Activated T-helper 2 cell treated with anti-CD3 and anti-CD28 coated beads, Interferon-gamma antibody, Interleukin-2, Interleukin-4, amounts not matched to agents 10 μg/mL and 5 μg/mL and 100 μg/mL, durations not matched to agents 14 hours and 24 hours and 36 hours (primary cell): ENCODE measurements at regions of chr22 and their contacts with region 1.

Region 1: DNA sequence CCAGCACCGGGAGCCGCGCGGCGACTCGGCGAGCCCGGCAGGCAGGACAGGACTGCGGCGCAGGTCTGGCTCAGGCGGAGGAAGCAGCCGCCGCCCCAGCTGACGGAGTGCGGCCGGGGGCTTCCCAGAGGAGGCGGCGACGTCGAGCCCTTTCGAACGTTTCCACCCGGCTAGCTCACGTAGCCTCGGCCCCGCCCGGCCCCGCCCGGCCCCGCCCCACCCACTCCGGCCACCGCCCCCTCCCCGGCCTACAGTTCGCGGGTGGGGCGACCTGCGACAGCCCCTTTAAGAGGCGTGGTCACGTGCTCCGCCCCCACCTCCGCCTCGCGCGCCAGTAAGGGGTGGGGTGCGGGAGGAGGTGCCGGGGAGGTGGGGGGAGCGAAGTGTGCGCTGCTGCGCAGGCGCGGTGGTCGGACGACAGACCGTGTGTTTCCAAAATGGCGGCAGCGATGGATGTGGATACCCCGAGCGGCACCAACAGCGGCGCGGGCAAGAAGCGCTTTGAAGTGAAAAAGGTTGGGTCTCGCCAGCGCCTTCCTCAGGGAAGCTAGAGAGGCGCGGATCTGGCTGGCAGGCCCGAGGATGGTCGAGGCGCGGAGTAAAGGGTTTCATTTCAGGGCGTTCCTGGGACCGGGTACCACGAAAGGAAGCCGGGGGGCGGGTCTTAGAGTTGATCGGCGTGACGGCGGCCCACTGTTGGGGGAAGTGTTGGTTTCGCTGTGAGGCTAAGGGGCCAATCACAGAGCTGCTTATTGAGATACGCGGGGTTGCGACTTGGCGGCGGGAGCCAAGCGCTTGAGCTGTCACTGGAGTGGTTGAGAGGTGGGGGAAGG is at the start of gene RBX1:
- DNase-seq: peak; percentile 98
- H3K4me3 Mint-ChIP-seq: peak within 1 kb of the TSS; percentile 95
- H3K27ac Mint-ChIP-seq: peak within 1 kb of the TSS; percentile 98
- H3K4me1 Mint-ChIP-seq: peaks cover 28% of the 10 kb centered on the region
- H3K27me3 Mint-ChIP-seq: no peaks in the 10 kb centered on the region
- total RNA-seq, gene RBX1: 103 and 110 TPM in 2 replicates

Region 2: GRCh38 chr22:40856513-40857308 is 94.5 kb before region 1 on chr22 and contains the starts of genes ST13 and XPNPEP3:
- intact Hi-C with region 1: loop called (anchors 2 kb)
- DNase-seq: peak; percentile 96
- H3K4me3 Mint-ChIP-seq: peak within 1 kb of the TSS; percentile 96
- H3K27ac Mint-ChIP-seq: peak within 1 kb of the TSS; percentile 100
- H3K4me1 Mint-ChIP-seq: peaks cover 38% of the 10 kb centered on the region
- H3K27me3 Mint-ChIP-seq: no peaks in the 10 kb centered on the region
- total RNA-seq, gene ST13: 194 and 201 TPM in 2 replicates
- total RNA-seq, gene XPNPEP3: 17.5 and 17.9 TPM in 2 replicates

Region 3: GRCh38 chr22:40982482-40983385 is 31.6 kb after region 1 on chr22:
- intact Hi-C with region 1: no loop called
- DNase-seq: no peak
- H3K4me3 Mint-ChIP-seq: no peak overlapping the region
- H3K27ac Mint-ChIP-seq: no peak overlapping the region
- H3K4me1 Mint-ChIP-seq: no peaks in the 10 kb centered on the region
- H3K27me3 Mint-ChIP-seq: no peaks in the 10 kb centered on the region

Region 4: GRCh38 chr22:41022470-41023298 is 71.5 kb after region 1 on chr22:
- intact Hi-C with region 1: loop called (anchors 2 kb)
- DNase-seq: peak; percentile 73
- H3K4me3 Mint-ChIP-seq: peak overlapping the region; percentile 83
- H3K27ac Mint-ChIP-seq: peak overlapping the region; percentile 79
- H3K4me1 Mint-ChIP-seq: peaks cover 12% of the 10 kb centered on the region
- H3K27me3 Mint-ChIP-seq: peaks cover 15% of the 10 kb centered on the region

Region 5: DNA sequence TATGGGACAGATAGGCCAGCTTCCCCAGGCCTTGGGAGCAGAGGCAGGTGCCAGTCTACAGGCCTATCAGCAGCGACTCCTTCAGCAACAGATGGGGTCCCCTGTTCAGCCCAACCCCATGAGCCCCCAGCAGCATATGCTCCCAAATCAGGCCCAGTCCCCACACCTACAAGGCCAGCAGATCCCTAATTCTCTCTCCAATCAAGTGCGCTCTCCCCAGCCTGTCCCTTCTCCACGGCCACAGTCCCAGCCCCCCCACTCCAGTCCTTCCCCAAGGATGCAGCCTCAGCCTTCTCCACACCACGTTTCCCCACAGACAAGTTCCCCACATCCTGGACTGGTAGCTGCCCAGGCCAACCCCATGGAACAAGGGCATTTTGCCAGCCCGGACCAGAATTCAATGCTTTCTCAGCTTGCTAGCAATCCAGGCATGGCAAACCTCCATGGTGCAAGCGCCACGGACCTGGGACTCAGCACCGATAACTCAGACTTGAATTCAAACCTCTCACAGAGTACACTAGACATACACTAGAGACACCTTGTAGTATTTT is 227.3 kb after region 1 on chr22:
- intact Hi-C with region 1: no loop called
- DNase-seq: no peak
- H3K4me3 Mint-ChIP-seq: no peak overlapping the region
- H3K27ac Mint-ChIP-seq: no peak overlapping the region
- H3K4me1 Mint-ChIP-seq: peaks cover 2% of the 10 kb centered on the region
- H3K27me3 Mint-ChIP-seq: no peaks in the 10 kb centered on the region

Region 6: GRCh38 chr22:41204992-41205900 is 254.1 kb after region 1 on chr22 and contains the start of gene L3MBTL2:
- intact Hi-C with region 1: loop called (anchors 5 kb)
- DNase-seq: peak; percentile 98
- H3K4me3 Mint-ChIP-seq: peak within 1 kb of the TSS; percentile 85
- H3K27ac Mint-ChIP-seq: peak within 1 kb of the TSS; percentile 83
- H3K4me1 Mint-ChIP-seq: peaks cover 12% of the 10 kb centered on the region
- H3K27me3 Mint-ChIP-seq: peaks cover 15% of the 10 kb centered on the region
- total RNA-seq, gene L3MBTL2: 39.3 and 42.2 TPM in 2 replicates

Region 7: DNA sequence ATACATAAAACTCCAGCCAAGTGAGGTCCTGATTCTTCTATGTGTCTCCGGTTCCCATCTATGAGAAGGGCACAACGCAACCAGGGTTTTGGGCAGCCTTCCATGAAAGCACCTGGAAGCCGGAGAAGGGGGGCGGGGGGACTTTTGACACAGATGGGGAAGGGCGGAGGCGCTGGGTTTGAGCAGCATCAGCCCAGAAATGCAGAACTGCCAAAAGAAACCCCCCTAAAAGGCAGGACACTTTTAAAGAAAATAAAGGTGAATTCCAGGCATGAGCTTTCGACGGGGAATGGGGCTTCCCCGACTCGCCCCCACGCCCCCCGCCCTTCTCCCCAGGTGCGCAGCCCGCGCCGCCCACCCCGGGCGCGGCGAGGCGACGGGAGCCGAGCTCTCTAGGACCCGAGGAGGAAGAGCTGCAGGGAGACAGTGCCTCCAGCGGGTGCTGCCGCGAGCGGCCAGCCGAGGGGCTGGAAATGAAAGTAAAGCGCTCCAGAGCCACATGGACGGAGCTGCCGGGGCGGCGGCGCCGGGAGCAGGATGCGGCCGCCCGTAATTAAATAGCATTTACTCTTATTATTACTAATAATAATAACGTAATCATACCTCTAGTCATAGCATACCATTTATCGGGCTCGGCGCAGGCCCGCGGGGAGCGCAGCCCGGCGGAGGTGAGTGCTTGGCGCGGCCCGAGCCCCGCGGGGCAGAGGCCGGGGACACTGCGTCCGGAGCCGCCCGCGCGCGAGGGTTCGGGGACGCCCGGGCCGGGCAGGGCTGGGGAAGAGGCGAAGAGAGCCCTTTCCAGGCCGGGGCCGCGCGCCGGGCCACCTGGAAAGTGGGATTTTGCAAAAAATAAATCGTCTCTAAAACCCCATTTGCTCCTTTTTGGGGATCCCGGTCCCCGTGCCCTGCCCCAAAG is 350.2 kb after region 1 on chr22 and contains the start of gene ZC3H7B:
- intact Hi-C with region 1: loop called (anchors 1 kb)
- DNase-seq: peak; percentile 79
- H3K4me3 Mint-ChIP-seq: peak within 1 kb of the TSS; percentile 76
- H3K27ac Mint-ChIP-seq: peak within 1 kb of the TSS; percentile 70
- H3K4me1 Mint-ChIP-seq: peaks cover 27% of the 10 kb centered on the region
- H3K27me3 Mint-ChIP-seq: no peaks in the 10 kb centered on the region
- total RNA-seq, gene ZC3H7B: 64.7 and 66.0 TPM in 2 replicates